Activated CD8-positive, alpha-beta T cell treated with anti-CD3 and anti-CD28 coated beads, Interleukin-2, amount 10 ng/mL, durations not matched to agents 7 days and 5 days (primary cell): ENCODE measurements at regions of chr5 and their contacts with region 1.

Region 1: DNA sequence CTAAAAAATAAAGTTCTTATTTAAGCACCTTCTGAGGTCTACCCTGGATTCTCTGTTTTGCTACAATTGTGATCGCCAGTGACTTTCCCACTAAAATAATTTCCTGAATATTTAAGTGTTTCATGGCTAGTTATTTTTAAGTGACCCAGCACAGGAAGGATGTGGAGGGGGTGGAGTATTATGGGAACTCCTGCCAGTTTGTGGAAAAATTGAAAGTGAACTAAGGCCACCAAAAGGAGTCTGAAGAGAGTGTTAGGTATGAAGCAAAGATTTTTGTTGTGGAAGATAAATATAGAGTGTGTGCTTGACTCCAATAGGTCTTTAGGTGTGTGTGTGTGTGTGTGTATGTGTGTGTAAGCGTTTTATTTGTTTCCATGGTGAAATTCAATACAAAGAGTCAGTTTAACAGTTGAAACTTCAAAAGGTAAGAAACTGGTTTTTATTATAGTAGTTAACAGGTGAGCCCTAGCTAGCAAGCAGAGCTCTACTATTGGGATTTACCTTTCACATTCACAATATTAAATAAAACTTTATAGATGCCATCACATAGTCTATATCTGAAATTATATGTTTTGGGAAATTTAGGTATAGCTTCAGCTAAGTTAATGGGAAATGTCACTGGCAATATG is 25.6 kb downstream of the RASGRF2 start:
- DNase-seq: no peak
- ATAC-seq: peak; percentile 56
- H3K4me3 Mint-ChIP-seq: no peak overlapping the region
- H3K27ac Mint-ChIP-seq: no peak overlapping the region
- H3K4me1 Mint-ChIP-seq: peaks cover 36% of the 10 kb centered on the region
- H3K27me3 Mint-ChIP-seq: no peaks in the 10 kb centered on the region

Region 2: GRCh38 chr5:80951366-80951765 is 34.3 kb before region 1 on chr5:
- CTCF ChIA-PET with region 1: no interaction called
- POLR2A ChIA-PET with region 1: no interaction called
- DNase-seq: no peak
- ATAC-seq: no peak
- H3K4me3 Mint-ChIP-seq: no peak overlapping the region
- H3K27ac Mint-ChIP-seq: no peak overlapping the region
- H3K4me1 Mint-ChIP-seq: peaks cover 1% of the 10 kb centered on the region
- H3K27me3 Mint-ChIP-seq: no peaks in the 10 kb centered on the region

Region 3: DNA sequence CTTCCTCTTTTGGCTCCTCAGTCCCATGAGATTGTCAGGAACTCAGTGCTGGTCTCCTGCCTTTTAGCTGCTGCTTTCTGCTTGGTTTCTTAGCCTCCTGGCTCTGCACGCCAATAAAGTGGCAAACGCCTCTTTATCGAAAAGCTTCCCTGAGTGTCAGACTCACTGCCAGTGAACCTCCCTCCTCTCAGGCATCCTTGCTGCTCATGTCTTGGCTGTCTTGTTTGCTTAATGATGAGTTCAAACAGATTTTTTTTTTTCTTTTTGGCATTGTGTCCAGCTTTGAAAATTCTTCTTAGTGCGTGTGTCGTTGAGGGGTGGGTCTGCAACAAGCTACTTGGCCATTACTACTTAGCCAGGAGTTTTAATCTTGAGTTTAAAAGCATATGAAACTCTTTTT is 10.6 kb before region 1 on chr5:
- CTCF ChIA-PET with region 1: interaction called, 11 read pairs
- POLR2A ChIA-PET with region 1: interaction called, 3 read pairs
- DNase-seq: no peak
- ATAC-seq: no peak
- H3K4me3 Mint-ChIP-seq: no peak overlapping the region
- H3K27ac Mint-ChIP-seq: no peak overlapping the region
- H3K4me1 Mint-ChIP-seq: peaks cover 23% of the 10 kb centered on the region
- H3K27me3 Mint-ChIP-seq: no peaks in the 10 kb centered on the region